Adrenal gland (tissue), 19 donors: ENCODE measurements at regions of chr5 and their contacts with region 1.

Region 1: GRCh38 chr5:61331407-61332357 is at the start of gene ZSWIM6:
- DNase-seq: peak; percentile 99 to 100 (median 100)
- H3K4me3 ChIP-seq: peak within 1 kb of the TSS; percentile 81 to 98 (median 96)
- H3K27ac ChIP-seq: peak within 1 kb of the TSS; percentile 57 to 99 (median 91)
- H3K4me1 ChIP-seq: peaks cover 0 to 28% of the 10 kb centered on the region in 2 donors
- H3K27me3 ChIP-seq: no peaks in the 10 kb centered on the region
- CTCF ChIP-seq: no peak
- POLR2A ChIP-seq: peak; percentile 98 to 99
- total RNA-seq, gene ZSWIM6: 5.5 to 14.6 (median 10.5) TPM

Region 2: GRCh38 chr5:61162010-61162831 is 169.5 kb before region 1 on chr5 and contains the start of gene SMIM15:
- intact Hi-C with region 1: loop called in 1 of 2 experiments (anchors 10 kb)
- DNase-seq: peak; percentile 87 to 93 (median 91)
- H3K4me3 ChIP-seq: peak within 1 kb of the TSS; percentile 38 to 82 (median 64)
- H3K27ac ChIP-seq: peak within 1 kb of the TSS; percentile 23 to 94 (median 83)
- H3K4me1 ChIP-seq: peaks cover 0 to 27% of the 10 kb centered on the region in 2 donors
- H3K27me3 ChIP-seq: no peaks in the 10 kb centered on the region
- CTCF ChIP-seq: peak in 2 of 6 experiments; percentile 13 to 23
- POLR2A ChIP-seq: peak; percentile 44 to 60
- total RNA-seq, gene SMIM15: 19.1 to 71.7 (median 51.6) TPM

Region 3: GRCh38 chr5:61408476-61409168 is 76.9 kb after region 1 on chr5:
- intact Hi-C with region 1: loop called in 1 of 2 experiments (anchors 10 kb)
- DNase-seq: peak; percentile 99 to 100 (median 100)
- H3K4me3 ChIP-seq: peak overlapping the region in 1 of 4 donors; percentile 10
- H3K27ac ChIP-seq: peak overlapping the region in 3 of 5 donors; percentile 55 to 63 (median 56)
- H3K4me1 ChIP-seq: peaks cover 5 to 26% of the 10 kb centered on the region in 2 donors
- H3K27me3 ChIP-seq: no peaks in the 10 kb centered on the region
- CTCF ChIP-seq: no peak
- POLR2A ChIP-seq: peak in 1 of 2 donors; percentile 42

Region 4: DNA sequence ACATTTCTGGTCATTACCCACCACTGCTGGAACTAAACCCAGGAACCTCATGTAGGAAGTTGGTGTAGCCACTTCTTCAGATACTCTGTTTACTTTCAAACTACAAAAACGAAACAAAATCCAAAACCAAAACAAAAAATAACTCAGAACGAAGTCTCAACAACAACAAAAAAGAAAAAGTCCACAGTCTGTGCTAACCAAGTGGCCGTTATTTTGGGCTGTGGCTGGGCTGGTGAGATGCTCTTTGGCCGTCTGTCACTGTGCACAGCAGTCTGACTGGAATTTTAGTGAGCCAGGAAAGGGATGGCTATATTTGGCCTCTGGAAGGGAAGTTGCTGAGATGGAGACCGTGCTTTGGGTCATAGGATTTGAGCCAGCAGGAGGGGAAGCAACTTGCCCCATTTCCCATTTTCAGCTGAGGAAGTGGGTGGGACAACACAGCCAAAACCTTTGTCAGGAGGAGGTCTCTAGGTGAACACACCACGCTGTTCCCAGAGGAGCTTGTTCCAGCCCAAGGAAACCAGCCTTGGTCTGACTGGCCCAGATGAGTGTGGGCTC is 334.5 kb after region 1 on chr5:
- intact Hi-C with region 1: loop called (anchors 5 to 10 kb)
- DNase-seq: peak in 4 of 7 donors; percentile 23 to 59 (median 32)
- H3K4me3 ChIP-seq: peak overlapping the region in 1 of 4 donors; percentile 23
- H3K27ac ChIP-seq: peak overlapping the region in 2 of 5 donors; percentile 17 to 58
- H3K4me1 ChIP-seq: peaks cover 0 to 13% of the 10 kb centered on the region in 2 donors
- H3K27me3 ChIP-seq: no peaks in the 10 kb centered on the region
- CTCF ChIP-seq: no peak
- POLR2A ChIP-seq: peak in 1 of 2 donors; percentile 5